ENCODE measurements at regions of chr1 and their contacts with region 1.

Region 1: DNA sequence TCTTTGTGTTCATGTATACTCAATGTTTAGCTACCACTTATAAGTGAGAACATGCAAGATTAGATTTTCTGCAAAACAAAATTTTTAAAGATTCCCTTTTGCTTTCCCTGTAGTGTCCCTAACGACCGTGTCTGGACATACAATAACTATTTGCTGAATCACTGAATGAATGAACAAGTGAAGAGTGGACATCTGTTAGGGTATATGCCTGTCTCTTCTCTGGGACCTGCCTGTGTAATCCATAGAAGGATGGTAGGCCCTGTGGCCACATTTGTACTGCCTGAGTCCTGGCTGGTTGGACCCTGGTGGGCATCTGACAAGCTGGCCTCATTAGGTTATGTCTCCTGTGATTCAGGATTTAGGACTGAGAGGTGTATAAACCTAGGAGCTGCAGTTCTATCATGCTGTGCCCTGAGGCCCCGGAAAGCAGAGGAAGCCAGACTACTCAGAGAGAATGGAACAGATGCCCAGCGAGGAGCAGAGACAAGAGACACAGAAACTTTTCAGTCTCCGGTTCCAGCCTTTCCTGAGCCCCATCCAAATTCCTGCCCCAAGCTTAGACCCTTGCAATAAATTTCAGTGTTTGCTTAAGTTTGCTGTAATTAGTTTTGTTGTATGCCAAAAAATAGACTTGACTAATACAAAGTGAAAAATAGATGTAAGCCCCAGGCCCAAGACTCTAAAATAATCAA is 7.5 kb upstream of the NCF2 start:
- DNase-seq: no peak
- ATAC-seq: no peak
- H3K4me3 Mint-ChIP-seq: no peak overlapping the region
- H3K27ac Mint-ChIP-seq: no peak overlapping the region
- H3K4me1 Mint-ChIP-seq: peaks cover 10% of the 10 kb centered on the region
- H3K27me3 Mint-ChIP-seq: no peaks in the 10 kb centered on the region
- CTCF ChIP-seq: no peak

Region 2: GRCh38 chr1:183515018-183515689 is 82.6 kb before region 1 on chr1:
- CTCF ChIA-PET with region 1: no interaction called
- POLR2A ChIA-PET with region 1: no interaction called
- DNase-seq: no peak
- ATAC-seq: no peak
- H3K4me3 Mint-ChIP-seq: no peak overlapping the region
- H3K27ac Mint-ChIP-seq: no peak overlapping the region; the same call in 1 of the 2 replicates
- H3K4me1 Mint-ChIP-seq: peaks cover 24% of the 10 kb centered on the region
- H3K27me3 Mint-ChIP-seq: no peaks in the 10 kb centered on the region
- CTCF ChIP-seq: no peak

Region 3: DNA sequence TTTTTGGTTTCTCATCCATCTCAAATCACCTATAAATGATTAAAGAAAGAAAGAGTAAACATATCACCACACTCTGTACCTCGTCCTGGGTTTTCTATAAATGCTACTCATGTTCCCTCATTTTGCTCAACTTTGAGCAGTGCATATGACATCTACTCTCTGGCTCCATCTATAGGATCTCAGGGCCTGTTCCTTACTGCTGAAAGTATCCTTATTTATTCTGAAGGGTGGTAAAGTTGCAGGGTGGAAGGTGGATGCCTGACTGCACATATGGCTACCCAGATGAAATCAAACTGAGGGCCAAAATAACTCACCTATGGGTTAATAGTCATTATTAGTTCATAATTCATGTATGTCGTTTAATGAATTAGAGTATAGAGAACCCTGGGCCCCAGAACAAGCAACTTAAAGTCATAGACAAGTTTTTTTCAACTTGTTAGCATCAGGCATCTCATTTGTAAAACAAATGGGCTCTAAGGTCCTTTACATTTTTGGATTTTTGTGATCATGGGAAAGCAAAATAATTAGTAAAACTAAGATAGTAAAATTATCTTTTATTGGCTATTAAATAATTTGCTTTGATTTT is 54.1 kb before region 1 on chr1:
- CTCF ChIA-PET with region 1: no interaction called
- POLR2A ChIA-PET with region 1: no interaction called
- DNase-seq: no peak
- ATAC-seq: peak; percentile 88
- H3K4me3 Mint-ChIP-seq: no peak overlapping the region
- H3K27ac Mint-ChIP-seq: no peak overlapping the region; the same call in 1 of the 2 replicates
- H3K4me1 Mint-ChIP-seq: peaks cover 32% of the 10 kb centered on the region
- H3K27me3 Mint-ChIP-seq: no peaks in the 10 kb centered on the region
- CTCF ChIP-seq: no peak

Region 4: GRCh38 chr1:183633633-183634343 is 36.0 kb after region 1 on chr1:
- CTCF ChIA-PET with region 1: no interaction called
- POLR2A ChIA-PET with region 1: interaction called, 10 read pairs
- DNase-seq: no peak
- ATAC-seq: peak; percentile 8
- H3K4me3 Mint-ChIP-seq: peak overlapping the region; percentile 98
- H3K27ac Mint-ChIP-seq: 0 out of 2 replicates have a peak overlapping the region, but pooled peaks have one; percentile 61
- H3K4me1 Mint-ChIP-seq: peaks cover 36% of the 10 kb centered on the region
- H3K27me3 Mint-ChIP-seq: peaks cover 15% of the 10 kb centered on the region
- CTCF ChIP-seq: no peak

Measured in WTC11 (cell line).